Posterior vena cava (tissue), 2 donors: ENCODE measurements at regions of chr6 and their contacts with region 1.

Region 1: DNA sequence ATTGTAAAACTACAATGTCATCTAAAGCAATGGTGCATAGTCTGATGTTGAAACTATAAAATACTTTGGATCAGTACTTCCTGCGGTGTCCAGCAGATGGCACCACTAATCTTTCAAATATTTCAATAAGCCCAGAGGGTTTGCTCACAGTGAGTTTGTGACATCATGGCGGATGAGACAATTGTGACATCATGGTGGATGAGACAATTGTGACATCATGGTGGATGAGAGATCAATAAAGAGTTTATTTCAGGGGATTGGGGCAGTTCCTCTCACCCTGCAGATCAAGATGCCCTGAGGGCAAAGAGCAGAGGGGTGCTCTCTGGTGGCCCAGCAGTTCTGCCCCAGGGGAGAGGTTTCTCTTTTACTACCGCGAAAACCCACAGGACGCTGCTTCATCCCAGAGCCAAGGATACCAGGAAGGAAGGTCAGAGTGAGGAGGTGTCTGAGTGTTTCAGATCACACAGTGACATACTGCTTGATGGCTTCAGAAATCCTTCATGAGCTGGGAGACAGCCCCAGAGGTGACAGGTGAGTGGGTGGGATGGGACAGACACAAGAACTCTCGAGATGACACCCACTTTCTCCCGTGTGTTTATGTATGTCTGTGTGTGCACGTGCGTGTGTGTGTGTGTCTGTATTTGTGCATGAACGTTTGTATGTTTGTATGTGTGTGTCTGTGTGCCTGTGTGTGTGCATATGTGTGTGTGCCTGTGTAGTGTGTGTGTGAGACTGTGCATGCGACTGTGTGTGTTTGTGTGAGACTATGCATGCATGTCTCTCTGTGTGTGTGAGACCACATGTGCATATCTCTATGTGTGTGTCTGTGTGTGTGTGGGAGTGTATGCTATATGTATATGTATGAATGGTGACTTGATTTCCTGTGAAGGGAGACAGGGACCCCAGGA is 7.3 kb upstream of the ULBP2 start:
- DNase-seq: peak; percentile 69

Region 2: DNA sequence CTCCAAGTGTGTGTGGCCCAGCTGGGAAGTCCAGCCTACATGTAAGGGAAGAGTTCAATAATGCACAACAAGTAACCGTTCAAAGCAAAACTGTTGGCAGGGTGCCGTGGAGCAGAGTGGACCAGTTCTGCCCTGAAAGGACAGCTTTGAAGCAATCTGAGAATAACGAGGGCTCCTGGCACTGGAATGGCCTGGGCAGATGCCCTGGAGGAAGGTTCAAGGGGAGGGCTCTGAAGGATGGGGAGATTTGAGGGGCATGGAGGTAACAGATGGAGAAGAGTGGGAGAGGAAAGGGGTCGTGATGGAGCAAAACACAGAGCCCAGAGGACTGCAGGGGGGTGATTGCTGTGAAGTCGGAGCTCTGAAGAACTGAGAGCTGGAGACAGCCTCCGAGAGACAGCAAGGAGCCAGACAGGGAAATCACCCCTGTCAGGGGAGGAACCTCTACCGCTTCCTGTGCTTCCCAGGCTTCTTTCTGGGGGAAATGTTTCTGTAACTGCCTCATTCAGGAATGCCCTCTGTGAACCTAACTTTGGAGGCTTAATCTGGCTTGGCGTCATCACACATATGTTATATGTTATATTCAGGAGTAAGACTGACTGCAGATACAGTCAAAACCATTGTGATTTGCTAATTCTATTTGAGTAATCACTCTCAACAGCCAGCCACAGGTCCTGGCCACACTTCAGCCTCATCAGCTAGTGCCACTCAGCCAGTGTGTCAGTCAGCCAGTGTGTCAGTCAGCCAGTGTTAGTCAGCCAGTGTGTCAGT is 490.9 kb before region 1 on chr6:
- intact Hi-C with region 1: no loop called
- DNase-seq: peak; percentile 19

Region 3: DNA sequence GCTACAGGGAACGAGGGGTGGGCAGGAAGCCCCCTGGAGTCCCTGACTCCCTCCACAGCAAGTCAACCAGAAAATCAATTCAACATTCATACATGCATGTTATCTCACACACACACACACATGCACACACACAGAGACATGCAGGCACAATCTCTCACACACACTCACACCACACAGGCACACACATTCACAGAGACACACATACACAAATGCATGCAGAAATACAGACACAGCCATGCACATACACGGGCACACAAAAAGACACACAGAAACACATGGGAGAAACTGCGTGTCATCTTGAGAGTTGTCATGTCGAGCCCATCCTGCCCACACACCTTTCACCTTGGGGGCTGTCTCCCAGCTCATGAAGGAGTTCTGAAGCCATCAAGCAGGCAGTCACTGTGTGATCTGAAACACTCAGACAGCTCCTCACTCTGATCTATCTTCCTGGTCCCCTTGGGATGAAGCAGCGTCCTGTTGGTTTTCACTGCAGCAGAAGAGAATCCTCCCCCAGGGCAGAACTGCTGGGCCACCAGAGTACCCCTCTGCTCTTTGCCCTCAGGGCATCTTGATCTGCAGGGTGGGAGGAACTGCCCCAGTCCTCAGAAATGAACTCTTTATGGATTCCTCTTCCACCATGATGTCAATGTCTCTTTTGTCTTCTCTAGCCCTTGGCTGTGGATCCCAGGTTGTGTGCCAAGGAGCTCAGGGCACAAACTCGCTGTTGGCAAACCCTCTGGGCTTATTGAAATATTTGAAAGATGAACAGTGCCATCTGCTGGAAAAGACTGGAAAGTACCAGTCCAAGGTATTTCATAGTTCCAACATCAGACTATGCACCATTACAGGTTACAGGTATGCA is 82.1 kb after region 1 on chr6:
- intact Hi-C with region 1: loop called (anchors 2 kb)
- DNase-seq: no peak

Region 4: GRCh38 chr6:150448221-150448620 is 513.7 kb after region 1 on chr6:
- intact Hi-C with region 1: no loop called
- DNase-seq: no peak

Region 5: GRCh38 chr6:150499882-150500312 is 565.4 kb after region 1 on chr6:
- intact Hi-C with region 1: no loop called
- DNase-seq: no peak

Region 6: GRCh38 chr6:150959166-150959565 is 1024.7 kb after region 1 on chr6:
- intact Hi-C with region 1: no loop called
- DNase-seq: no peak